ENCODE measurements at regions of chr1 and their contacts with region 1.

Region 1: GRCh38 chr1:202576816-202577215 is 133.4 kb downstream of the SYT2 start:
- DNase-seq: no peak
- H3K4me3 ChIP-seq: no peak overlapping the region
- H3K27ac ChIP-seq: peak overlapping the region; percentile 72 to 96
- H3K4me1 ChIP-seq: peaks cover 52 to 77% of the 10 kb centered on the region in 2 experiments
- H3K27me3 ChIP-seq: no peaks in the 10 kb centered on the region
- CTCF ChIP-seq: no peak
- EP300 ChIP-seq: no peak
- RAD21 ChIP-seq: no peak

Region 2: GRCh38 chr1:202547215-202547614 is 29.6 kb before region 1 on chr1:
- CTCF ChIA-PET with region 1: no interaction called
- POLR2A ChIA-PET with region 1: no interaction called
- DNase-seq: no peak
- H3K4me3 ChIP-seq: no peak overlapping the region
- H3K27ac ChIP-seq: peak overlapping the region in 1 of 2 experiments; percentile 39; a peak in 1 of 4 replicates
- H3K4me1 ChIP-seq: peaks cover 7 to 8% of the 10 kb centered on the region in 2 experiments
- H3K27me3 ChIP-seq: no peaks in the 10 kb centered on the region
- CTCF ChIP-seq: no peak
- EP300 ChIP-seq: no peak
- RAD21 ChIP-seq: no peak

Region 3: DNA sequence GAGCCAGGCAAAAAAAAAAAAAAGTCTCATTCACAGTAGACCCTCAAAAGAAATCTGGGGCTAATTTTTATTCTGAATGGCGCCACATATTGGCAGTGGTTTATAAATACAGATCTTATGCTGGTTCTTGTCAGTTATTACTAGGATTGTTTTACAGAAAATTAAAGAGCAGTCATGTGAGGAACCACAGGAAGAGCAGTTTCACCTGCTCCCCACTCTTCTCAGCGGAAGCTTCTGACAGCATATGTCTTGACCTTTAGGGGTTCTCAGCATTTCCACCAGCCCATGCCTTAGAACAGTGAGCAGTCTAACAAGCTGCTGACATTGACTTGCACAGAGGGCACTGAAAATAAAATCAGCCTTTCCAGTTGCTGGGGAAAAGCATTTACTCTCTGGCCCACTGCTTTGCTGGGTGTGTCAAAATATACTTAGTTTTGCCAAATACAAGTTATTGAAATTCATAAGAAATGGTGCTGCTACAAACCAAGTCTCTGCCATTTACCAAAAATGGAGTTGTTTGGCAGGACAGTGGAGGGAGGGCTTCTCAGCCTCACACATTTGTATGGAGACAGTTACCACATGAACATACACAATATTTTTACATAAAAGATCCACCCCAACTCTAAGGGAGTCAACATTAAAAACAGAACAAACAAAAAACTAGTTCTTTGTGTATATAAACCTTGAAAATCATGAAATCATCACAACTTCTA is 10.8 kb before region 1 on chr1:
- CTCF ChIA-PET with region 1: interaction called, 14 read pairs
- POLR2A ChIA-PET with region 1: no interaction called
- DNase-seq: no peak
- H3K4me3 ChIP-seq: no peak overlapping the region
- H3K27ac ChIP-seq: peak overlapping the region; percentile 75 to 92; a peak in 2 of 4 replicates
- H3K4me1 ChIP-seq: peaks cover 39 to 45% of the 10 kb centered on the region in 2 experiments
- H3K27me3 ChIP-seq: no peaks in the 10 kb centered on the region
- CTCF ChIP-seq: no peak
- EP300 ChIP-seq: no peak
- RAD21 ChIP-seq: no peak

Region 4: GRCh38 chr1:202589190-202590030 is 12.6 kb after region 1 on chr1:
- CTCF ChIA-PET with region 1: interaction called, 20 read pairs
- POLR2A ChIA-PET with region 1: interaction called, 5 read pairs
- DNase-seq: peak; percentile 45
- H3K4me3 ChIP-seq: no peak overlapping the region
- H3K27ac ChIP-seq: peak overlapping the region; percentile 82 to 95
- H3K4me1 ChIP-seq: peaks cover 33 to 60% of the 10 kb centered on the region in 2 experiments
- H3K27me3 ChIP-seq: no peaks in the 10 kb centered on the region
- CTCF ChIP-seq: peak; percentile 25
- EP300 ChIP-seq: peak; percentile 66 to 98; a peak in 3 of 4 replicates
- RAD21 ChIP-seq: no peak

Region 5: DNA sequence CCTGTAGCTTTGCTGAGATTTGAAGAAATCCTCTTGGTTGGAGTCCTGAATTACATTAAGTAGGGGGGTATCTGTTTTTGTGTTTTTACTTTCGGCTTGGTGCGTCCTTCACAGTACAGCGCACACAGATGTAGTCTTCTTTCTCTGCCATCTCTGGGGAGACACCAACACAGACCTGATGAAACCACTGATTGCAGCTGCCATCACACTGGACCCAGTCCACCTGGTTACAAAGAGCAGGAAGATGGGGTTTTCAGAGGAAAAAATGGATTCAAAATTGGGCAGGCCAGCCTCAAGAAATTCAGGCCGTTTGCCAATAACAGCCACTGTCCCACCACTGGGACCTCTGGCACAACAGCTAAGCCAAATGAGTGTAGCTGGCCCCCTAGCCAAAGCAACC is 152.1 kb after region 1 on chr1:
- CTCF ChIA-PET with region 1: no interaction called
- POLR2A ChIA-PET with region 1: no interaction called
- DNase-seq: no peak
- H3K4me3 ChIP-seq: no peak overlapping the region
- H3K27ac ChIP-seq: no peak overlapping the region; a peak in 1 of 4 replicates
- H3K4me1 ChIP-seq: no peaks in the 10 kb centered on the region
- H3K27me3 ChIP-seq: no peaks in the 10 kb centered on the region
- CTCF ChIP-seq: no peak
- EP300 ChIP-seq: no peak
- RAD21 ChIP-seq: no peak

Measured in SK-N-SH (cell line).